Activated CD4-positive, alpha-beta memory T cell treated with anti-CD3 and anti-CD28 coated beads for 36 hours (primary cell): ENCODE measurements at regions of chr11 and their contacts with region 1.

Region 1: DNA sequence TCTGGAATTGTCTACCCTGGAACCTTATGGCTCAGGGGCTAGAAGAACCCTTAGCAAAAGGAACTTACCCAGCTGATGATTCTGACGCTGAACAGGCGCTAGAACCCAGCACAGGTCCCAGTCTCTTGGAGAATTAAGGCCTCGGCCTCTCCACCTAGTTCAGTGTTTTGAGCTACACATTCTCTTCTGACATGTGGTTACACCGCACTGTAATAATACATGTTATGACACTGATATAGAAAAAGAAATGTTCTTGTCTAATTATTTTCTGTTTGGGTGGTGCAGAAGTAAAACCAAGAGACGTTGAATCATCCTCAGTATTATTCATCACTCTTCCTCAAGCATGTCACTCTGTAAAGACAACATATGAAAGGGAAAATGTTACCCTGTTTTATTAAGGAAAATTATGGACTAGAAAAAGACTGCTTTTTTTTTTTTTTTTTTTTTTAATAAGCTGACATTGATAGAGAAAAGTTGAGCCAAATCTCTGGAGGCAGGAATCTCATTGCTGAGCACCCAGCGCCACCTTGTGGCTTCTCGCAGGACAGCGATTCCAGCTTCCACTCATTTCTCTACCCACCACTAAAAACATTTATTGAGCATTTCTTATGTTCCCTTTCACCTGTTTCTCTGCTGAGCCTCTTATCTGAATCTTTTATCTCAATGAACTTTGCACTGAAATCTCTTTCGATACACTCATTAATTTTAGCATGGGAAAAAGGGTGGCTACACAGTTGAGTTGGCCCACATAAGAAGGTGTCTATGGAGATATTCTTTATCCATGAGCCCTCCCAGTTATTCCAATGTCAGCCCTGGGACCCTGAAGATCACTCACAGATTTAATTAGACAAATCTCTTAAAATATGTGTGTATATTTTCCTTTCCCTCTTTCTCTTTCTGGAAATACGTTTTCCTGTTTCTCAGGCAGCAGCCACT is 12.6 kb upstream of the APLNR start:
- DNase-seq: peak; percentile 65
- H3K4me3 Mint-ChIP-seq: no peak overlapping the region
- H3K27ac Mint-ChIP-seq: no peak overlapping the region
- H3K4me1 Mint-ChIP-seq: peaks cover 4% of the 10 kb centered on the region
- H3K27me3 Mint-ChIP-seq: peaks cover 33% of the 10 kb centered on the region

Region 2: GRCh38 chr11:56783448-56784041 is 466.1 kb before region 1 on chr11:
- CTCF ChIA-PET with region 1: interaction called, 6 read pairs
- POLR2A ChIA-PET with region 1: no interaction called
- intact Hi-C with region 1: loop called (anchors 5 kb)
- DNase-seq: no peak
- H3K4me3 Mint-ChIP-seq: no peak overlapping the region
- H3K27ac Mint-ChIP-seq: no peak overlapping the region
- H3K4me1 Mint-ChIP-seq: no peaks in the 10 kb centered on the region
- H3K27me3 Mint-ChIP-seq: no peaks in the 10 kb centered on the region

Region 3: DNA sequence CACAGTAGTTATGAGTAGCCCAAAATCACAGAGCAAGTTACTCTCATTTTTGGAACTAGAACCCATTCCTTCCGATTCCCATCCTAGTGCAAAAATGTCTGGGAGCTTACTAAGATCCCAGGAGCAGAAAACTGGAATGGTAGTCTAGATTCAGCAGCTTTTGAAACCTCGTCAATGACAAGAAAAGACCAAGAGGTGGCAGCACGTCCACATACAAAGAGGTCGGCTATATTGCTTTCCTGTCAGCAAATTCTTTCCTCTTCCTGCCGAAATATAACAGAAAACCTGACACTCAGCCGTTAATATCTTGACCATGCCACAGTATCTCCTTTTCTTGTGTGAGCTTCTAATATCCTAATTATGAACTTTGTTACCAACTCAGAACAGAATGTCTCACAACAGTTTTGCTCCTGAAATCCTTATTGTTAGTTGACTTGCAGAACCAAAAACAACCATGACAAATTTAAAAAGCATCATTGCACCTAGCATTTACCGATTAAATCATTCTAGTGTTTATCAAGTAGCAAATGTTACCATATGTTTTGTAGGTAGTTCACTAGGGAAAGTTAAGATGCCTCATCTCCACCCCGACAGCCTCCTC is 408.3 kb before region 1 on chr11:
- CTCF ChIA-PET with region 1: interaction called, 43 read pairs
- POLR2A ChIA-PET with region 1: no interaction called
- intact Hi-C with region 1: loop called (anchors 1 kb)
- DNase-seq: peak; percentile 39
- H3K4me3 Mint-ChIP-seq: no peak overlapping the region
- H3K27ac Mint-ChIP-seq: no peak overlapping the region
- H3K4me1 Mint-ChIP-seq: peaks cover 2% of the 10 kb centered on the region
- H3K27me3 Mint-ChIP-seq: peaks cover 4% of the 10 kb centered on the region

Region 4: DNA sequence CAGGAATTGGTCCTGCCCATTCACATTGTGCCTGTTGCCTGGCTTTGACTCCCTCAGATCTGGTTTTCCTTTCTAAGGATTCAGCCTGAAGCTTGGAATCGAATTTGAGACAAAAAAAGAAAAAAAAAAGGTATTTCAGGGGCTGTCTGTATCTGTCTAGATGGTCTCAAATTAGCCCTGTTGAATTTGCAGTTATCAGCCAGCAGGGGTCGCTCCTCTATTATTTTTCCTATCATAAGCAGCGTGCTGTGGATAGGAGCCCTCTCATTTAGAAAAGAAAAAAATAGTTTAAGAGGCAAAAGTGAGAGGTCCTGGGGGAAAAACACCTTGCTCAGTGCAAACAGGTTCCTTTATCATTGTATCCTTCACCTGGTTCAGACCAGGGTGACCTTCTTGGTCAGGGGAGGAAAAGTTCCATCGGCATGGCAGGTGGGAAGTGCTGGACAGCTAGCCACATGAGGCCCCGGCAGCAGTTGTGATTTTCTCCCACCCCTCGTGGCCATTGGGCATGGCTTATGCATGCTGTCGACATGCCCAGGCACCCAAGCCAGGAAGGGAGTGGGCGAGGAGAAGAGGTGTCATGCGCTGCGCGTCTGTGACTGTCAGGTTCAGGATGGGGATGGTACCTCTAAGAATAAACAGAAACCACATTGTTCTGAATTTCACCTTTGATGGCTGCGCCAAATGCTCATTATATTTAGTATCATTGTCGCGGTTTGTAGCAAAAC is 247.8 kb before region 1 on chr11:
- CTCF ChIA-PET with region 1: no interaction called
- POLR2A ChIA-PET with region 1: no interaction called
- intact Hi-C with region 1: loop called (anchors 10 kb)
- DNase-seq: no peak
- H3K4me3 Mint-ChIP-seq: no peak overlapping the region
- H3K27ac Mint-ChIP-seq: no peak overlapping the region
- H3K4me1 Mint-ChIP-seq: no peaks in the 10 kb centered on the region
- H3K27me3 Mint-ChIP-seq: no peaks in the 10 kb centered on the region

Region 5: DNA sequence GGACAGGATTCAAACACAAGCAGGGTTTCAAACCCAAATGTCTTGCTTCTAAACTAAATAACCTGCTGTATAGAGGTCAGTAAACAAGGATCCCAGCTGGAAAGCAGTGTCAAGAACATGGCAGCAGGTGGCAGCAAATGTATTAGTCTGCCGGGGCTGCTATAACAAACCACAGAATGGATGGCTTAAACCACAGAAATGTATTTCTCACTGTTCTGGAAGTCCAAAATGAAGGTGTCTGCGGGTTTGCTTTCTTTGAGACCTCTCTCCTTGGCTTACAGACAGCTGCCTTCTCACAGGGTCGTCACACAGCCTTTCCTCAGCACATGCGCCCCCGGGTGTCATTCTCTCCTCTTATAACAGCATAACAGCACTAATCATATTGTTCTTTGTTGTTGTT is 133.0 kb before region 1 on chr11:
- CTCF ChIA-PET with region 1: interaction called, 13 read pairs
- POLR2A ChIA-PET with region 1: no interaction called
- intact Hi-C with region 1: loop called (anchors 1 kb)
- DNase-seq: peak; percentile 20
- H3K4me3 Mint-ChIP-seq: no peak overlapping the region
- H3K27ac Mint-ChIP-seq: no peak overlapping the region
- H3K4me1 Mint-ChIP-seq: no peaks in the 10 kb centered on the region
- H3K27me3 Mint-ChIP-seq: no peaks in the 10 kb centered on the region

Region 6: DNA sequence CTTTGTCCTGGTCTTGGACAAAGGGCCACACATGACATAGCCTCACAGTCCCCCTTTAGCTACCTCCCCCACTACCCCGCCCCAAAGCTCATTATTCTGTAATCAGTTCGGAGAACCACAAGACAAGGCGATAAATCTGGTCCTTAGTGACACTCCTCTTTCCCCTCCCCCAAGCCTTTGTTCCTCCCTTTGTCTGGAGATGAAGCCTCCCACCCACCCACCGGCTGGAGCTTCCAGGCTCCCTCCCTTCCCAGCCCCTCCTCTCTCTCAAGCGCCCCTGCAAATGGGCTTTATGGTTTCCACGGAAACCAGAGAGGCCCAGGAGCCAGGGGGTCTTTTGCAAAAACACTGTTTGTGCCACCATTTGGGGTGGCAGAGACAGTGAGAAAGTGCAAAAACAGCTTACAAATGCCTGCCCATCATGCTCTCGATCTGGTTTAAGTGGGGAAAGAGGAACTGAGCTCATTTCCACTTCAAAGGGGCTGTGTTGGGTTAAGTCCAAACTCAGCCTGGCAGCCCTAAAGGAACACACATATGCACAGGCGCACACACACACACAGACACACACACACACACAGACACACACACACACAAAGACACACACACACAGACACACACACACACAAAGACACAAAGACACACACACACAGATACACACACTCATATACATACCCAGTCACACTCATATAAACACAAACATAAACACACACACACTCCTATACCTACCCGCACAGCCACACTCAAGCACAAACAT is 36.1 kb before region 1 on chr11:
- CTCF ChIA-PET with region 1: no interaction called
- POLR2A ChIA-PET with region 1: no interaction called
- intact Hi-C with region 1: no loop called
- DNase-seq: no peak
- H3K4me3 Mint-ChIP-seq: no peak overlapping the region
- H3K27ac Mint-ChIP-seq: no peak overlapping the region
- H3K4me1 Mint-ChIP-seq: no peaks in the 10 kb centered on the region
- H3K27me3 Mint-ChIP-seq: peaks cover 7% of the 10 kb centered on the region

Region 7: DNA sequence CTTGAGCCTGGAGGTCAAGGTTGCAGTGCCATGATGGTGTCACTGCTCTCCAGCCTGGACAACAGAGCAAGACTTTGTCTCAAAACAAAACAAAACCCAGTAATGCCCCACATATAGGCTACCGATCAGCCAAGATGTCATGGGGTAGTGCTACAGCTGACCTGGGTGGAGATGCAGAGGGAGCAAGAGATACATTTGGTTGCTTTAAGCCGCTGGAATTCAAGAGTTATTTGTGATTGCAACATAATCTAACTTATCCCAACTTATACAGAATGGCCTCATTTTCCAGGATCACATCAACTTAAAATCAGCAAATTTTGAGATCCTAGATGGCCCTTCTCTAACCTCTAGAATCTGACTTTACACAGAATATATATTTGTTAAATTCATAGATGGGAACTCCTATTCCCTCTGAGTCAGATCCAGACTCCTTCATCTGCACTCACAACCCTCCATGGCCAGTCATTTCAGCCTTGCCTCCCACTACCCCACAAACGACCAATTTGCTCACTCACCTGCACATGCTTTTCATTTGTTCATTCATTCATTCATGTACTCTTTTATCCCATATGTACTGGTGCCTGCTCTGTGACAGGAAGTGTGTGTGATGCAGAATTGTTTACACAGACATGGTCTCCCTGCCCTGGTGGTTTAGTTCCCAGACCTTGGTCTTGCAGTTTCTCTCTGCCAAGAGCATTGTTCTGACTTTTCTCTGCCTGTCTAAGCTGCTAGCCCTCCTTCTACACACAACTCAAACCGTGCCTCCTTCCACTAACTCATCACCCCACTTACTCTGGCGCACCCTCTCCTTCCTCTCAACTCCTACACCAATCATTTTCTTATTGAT is 11.5 kb after region 1 on chr11:
- CTCF ChIA-PET with region 1: interaction called, 12 read pairs
- POLR2A ChIA-PET with region 1: no interaction called
- intact Hi-C with region 1: no loop called
- DNase-seq: peak; percentile 17
- H3K4me3 Mint-ChIP-seq: no peak overlapping the region
- H3K27ac Mint-ChIP-seq: no peak overlapping the region
- H3K4me1 Mint-ChIP-seq: no peaks in the 10 kb centered on the region
- H3K27me3 Mint-ChIP-seq: peaks cover 15% of the 10 kb centered on the region

Region 8: GRCh38 chr11:57301711-57302423 is 52.2 kb after region 1 on chr11:
- CTCF ChIA-PET with region 1: no interaction called
- POLR2A ChIA-PET with region 1: no interaction called
- intact Hi-C with region 1: no loop called
- DNase-seq: no peak
- H3K4me3 Mint-ChIP-seq: no peak overlapping the region
- H3K27ac Mint-ChIP-seq: no peak overlapping the region
- H3K4me1 Mint-ChIP-seq: no peaks in the 10 kb centered on the region
- H3K27me3 Mint-ChIP-seq: no peaks in the 10 kb centered on the region